Caco-2 (cell line): ENCODE measurements at regions of chr10 and their contacts with region 1.

Region 1: GRCh38 chr10:7525314-7526016 is 114.6 kb upstream of the SFMBT2 start:
- DNase-seq: peak; percentile 69 to 86
- H3K4me3 ChIP-seq: no peak overlapping the region
- H3K4me3 Mint-ChIP-seq: peak overlapping the region; percentile 15
- H3K27ac Mint-ChIP-seq: no peak overlapping the region
- H3K4me1 ChIP-seq: no peaks in the 10 kb centered on the region; the same call in 1 of the 2 replicates
- H3K4me1 Mint-ChIP-seq: peaks cover 9% of the 10 kb centered on the region
- H3K27me3 ChIP-seq: peaks cover 4% of the 10 kb centered on the region; the same call in 1 of the 2 replicates
- H3K27me3 Mint-ChIP-seq: peaks cover 20% of the 10 kb centered on the region
- CTCF ChIP-seq: peak; percentile 86 to 95

Region 2: GRCh38 chr10:7561216-7561893 is 35.9 kb after region 1 on chr10:
- CTCF ChIA-PET with region 1: interaction called, 3 read pairs
- POLR2A ChIA-PET with region 1: no interaction called
- intact Hi-C with region 1: loop called (anchors 2 kb)
- DNase-seq: peak in 1 of 2 experiments; percentile 38
- H3K4me3 ChIP-seq: no peak overlapping the region
- H3K4me3 Mint-ChIP-seq: peak overlapping the region; percentile 28
- H3K27ac Mint-ChIP-seq: no peak overlapping the region
- H3K4me1 ChIP-seq: no peaks in the 10 kb centered on the region
- H3K4me1 Mint-ChIP-seq: no peaks in the 10 kb centered on the region
- H3K27me3 ChIP-seq: no peaks in the 10 kb centered on the region
- H3K27me3 Mint-ChIP-seq: no peaks in the 10 kb centered on the region
- CTCF ChIP-seq: no peak

Region 3: GRCh38 chr10:7687228-7687907 is 161.9 kb after region 1 on chr10:
- CTCF ChIA-PET with region 1: interaction called, 206 read pairs
- POLR2A ChIA-PET with region 1: interaction called, 6 read pairs
- intact Hi-C with region 1: loop called (anchors 1 kb)
- DNase-seq: peak; percentile 93 to 94
- H3K4me3 ChIP-seq: no peak overlapping the region
- H3K4me3 Mint-ChIP-seq: peak overlapping the region; percentile 66
- H3K27ac Mint-ChIP-seq: peak overlapping the region; percentile 75
- H3K4me1 ChIP-seq: peaks cover 6% of the 10 kb centered on the region
- H3K4me1 Mint-ChIP-seq: peaks cover 16% of the 10 kb centered on the region
- H3K27me3 ChIP-seq: no peaks in the 10 kb centered on the region
- H3K27me3 Mint-ChIP-seq: no peaks in the 10 kb centered on the region
- CTCF ChIP-seq: peak; percentile 96 to 98

Region 4: GRCh38 chr10:7756360-7756992 is 231.0 kb after region 1 on chr10:
- CTCF ChIA-PET with region 1: interaction called, 16 read pairs
- POLR2A ChIA-PET with region 1: no interaction called
- intact Hi-C with region 1: loop called (anchors 1 kb)
- DNase-seq: peak in 1 of 2 experiments; percentile 56
- H3K4me3 ChIP-seq: no peak overlapping the region
- H3K4me3 Mint-ChIP-seq: no peak overlapping the region
- H3K27ac Mint-ChIP-seq: no peak overlapping the region
- H3K4me1 ChIP-seq: no peaks in the 10 kb centered on the region
- H3K4me1 Mint-ChIP-seq: no peaks in the 10 kb centered on the region
- H3K27me3 ChIP-seq: no peaks in the 10 kb centered on the region
- H3K27me3 Mint-ChIP-seq: no peaks in the 10 kb centered on the region
- CTCF ChIP-seq: peak; percentile 50 to 84

Region 5: DNA sequence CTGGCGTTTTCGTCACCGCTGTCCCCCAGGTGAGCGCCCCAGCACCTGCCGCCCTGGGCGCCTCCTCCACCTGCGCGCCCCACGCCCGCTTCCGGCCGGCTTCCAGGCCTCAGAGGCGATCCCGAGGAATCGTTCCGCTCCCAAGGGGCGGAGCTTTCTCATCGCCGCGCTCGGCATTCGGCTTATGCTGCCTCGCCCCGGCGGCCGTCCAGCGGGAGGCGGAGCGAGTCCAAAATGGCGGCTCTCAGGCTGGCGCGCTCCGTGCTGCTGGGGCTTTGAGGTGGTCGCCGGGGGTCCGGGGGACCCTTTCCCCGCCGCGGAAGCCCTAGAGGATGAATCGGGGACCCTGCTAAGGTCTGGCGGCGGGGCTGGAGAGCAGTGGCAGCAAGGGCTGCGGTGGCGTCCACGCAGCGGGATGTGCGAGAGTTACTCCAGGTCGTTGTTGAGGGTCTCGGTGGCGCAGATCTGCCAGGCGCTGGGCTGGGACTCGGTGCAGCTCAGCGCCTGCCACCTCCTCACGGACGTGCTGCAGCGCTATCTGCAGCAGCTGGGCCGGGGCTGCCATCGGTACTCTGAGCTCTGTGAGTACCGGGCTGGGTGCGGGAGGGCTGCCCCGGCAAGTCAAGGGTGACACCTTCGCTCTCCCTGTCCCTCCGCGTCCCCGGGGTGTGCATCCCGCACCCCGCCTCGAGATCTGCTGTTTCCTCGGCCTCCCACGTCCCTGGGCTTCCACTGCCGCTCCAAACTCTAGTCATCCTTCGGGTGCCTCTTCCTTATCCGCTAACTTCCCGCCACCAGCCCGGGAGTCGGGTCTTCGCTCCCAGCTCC is 293.0 kb after region 1 on chr10 and contains the start of gene TAF3:
- CTCF ChIA-PET with region 1: interaction called, 26 read pairs
- POLR2A ChIA-PET with region 1: interaction called, 3 read pairs
- intact Hi-C with region 1: loop called (anchors 1 kb)
- DNase-seq: peak; percentile 94 to 99
- H3K4me3 ChIP-seq: peak within 1 kb of the TSS; percentile 95
- H3K4me3 Mint-ChIP-seq: peak within 1 kb of the TSS; percentile 84
- H3K27ac Mint-ChIP-seq: peak within 1 kb of the TSS; percentile 72
- H3K4me1 ChIP-seq: peaks cover 4% of the 10 kb centered on the region; the same call in 1 of the 2 replicates
- H3K4me1 Mint-ChIP-seq: peaks cover 8% of the 10 kb centered on the region
- H3K27me3 ChIP-seq: no peaks in the 10 kb centered on the region
- H3K27me3 Mint-ChIP-seq: no peaks in the 10 kb centered on the region
- CTCF ChIP-seq: no peak
- total RNA-seq, gene TAF3: 28.9 and 30.6 TPM in 2 replicates

Region 6: DNA sequence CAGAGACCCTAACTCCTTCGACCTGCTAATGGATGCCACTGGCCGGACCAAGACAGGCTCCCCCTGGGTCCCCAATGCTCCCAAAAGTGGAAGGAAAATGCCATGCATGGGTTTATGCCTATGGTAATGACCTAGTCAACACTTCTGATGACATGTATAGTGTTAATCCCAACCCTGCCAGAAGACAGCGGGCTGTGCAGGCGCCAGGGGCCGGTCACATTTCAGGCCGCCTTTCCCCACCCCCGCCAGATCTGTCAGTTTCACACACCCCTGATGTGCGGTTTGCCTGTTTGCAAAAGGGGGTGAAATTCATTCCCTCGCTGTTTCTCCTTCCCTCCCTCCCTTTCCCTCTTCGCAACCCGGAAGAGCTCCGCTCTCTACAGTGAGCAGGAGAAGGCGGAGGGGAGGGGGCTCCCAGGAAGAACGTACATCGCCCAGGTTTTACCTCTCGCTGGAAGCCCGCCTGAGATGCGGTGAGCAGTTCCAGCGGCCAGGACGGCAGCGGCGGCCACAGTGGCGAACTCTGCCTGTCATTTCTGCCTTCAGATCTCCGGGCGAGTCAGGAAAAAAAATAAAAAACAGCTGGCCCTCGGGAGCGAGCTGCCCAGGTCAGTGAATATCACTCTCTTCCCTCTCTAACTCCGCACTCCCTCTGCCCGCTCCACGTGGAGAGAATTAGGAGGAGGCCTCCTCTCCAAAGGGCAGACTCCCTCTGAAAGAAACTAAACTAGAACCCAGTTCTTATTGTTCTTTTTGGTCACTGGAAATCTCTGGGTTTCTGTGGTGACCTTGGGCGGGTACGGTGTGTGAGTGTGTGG is 519.7 kb after region 1 on chr10:
- CTCF ChIA-PET with region 1: interaction called, 4 read pairs
- POLR2A ChIA-PET with region 1: no interaction called
- intact Hi-C with region 1: loop called (anchors 5 kb)
- DNase-seq: peak; percentile 71 to 74
- H3K4me3 ChIP-seq: peak overlapping the region; percentile 43
- H3K4me3 Mint-ChIP-seq: peak overlapping the region; percentile 76
- H3K27ac Mint-ChIP-seq: peak overlapping the region; percentile 65
- H3K4me1 ChIP-seq: peaks cover 24% of the 10 kb centered on the region
- H3K4me1 Mint-ChIP-seq: peaks cover 28% of the 10 kb centered on the region
- H3K27me3 ChIP-seq: no peaks in the 10 kb centered on the region
- H3K27me3 Mint-ChIP-seq: no peaks in the 10 kb centered on the region
- CTCF ChIP-seq: no peak

Region 7: DNA sequence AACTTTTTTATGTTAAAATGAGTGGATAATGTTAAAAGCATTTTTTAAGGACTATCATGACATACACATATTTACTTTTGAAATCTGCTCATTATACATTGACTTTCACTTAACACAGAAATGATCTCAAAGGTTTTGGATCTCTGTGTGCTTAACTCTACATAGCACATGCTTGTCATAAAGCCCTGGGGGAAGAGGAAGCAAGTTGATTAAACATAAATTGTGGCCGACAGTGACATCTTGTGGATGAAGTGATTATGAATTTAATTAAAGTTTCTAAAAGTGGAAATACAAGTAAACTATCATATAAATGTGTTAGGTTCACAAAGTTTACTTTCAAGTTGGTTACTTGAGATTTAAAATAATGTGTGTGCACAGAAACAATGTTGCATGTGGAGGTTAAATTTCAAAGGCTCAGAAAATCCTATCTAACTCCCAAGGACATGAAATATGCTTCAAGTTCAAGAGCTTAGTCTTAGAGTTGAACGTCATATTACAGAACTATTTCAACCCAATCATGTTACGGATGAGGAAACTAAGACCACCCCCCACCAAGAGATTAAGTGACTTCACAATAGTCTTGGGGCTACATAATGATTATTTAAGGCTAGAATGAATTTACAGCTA is 1776.8 kb after region 1 on chr10:
- CTCF ChIA-PET with region 1: interaction called, 5 read pairs
- POLR2A ChIA-PET with region 1: no interaction called
- intact Hi-C with region 1: loop called (anchors 1 kb)
- DNase-seq: peak in 1 of 2 experiments; percentile 53
- H3K4me3 ChIP-seq: no peak overlapping the region
- H3K4me3 Mint-ChIP-seq: no peak overlapping the region
- H3K27ac Mint-ChIP-seq: no peak overlapping the region
- H3K4me1 ChIP-seq: no peaks in the 10 kb centered on the region
- H3K4me1 Mint-ChIP-seq: no peaks in the 10 kb centered on the region
- H3K27me3 ChIP-seq: no peaks in the 10 kb centered on the region
- H3K27me3 Mint-ChIP-seq: peaks cover 7% of the 10 kb centered on the region
- CTCF ChIP-seq: peak; percentile 40 to 48